ENCODE measurements at regions of chr19 and their contacts with region 1.

Region 1: GRCh38 chr19:34428549-34429285 is 536 bp downstream of the UBA2 start:
- DNase-seq: peak; percentile 43
- H3K4me3 ChIP-seq: peak overlapping the region; percentile 88
- H3K27ac ChIP-seq: peak overlapping the region; percentile 65
- H3K4me1 ChIP-seq: peaks cover 28% of the 10 kb centered on the region
- CTCF ChIP-seq: no peak

Region 2: DNA sequence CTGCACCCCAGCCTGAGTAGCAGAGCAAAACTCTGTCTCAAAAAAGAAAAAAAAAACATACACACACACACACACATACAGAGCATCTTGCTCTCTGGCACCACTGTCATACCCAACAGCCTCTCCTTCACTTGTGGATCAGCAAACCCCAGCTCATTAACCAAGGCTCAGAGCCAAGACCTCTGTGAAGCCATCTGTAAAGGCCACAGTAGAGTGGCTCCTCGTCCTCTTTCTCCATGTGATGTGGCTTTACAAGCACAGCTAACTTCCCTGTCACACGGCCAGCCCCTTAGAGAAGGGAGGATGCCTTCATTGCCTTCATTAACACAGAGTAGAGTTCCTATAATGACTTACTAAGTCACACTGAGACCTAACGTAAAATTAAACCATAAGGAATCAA is 319.1 kb before region 1 on chr19:
- CTCF ChIA-PET with region 1: no interaction called
- POLR2A ChIA-PET with region 1: no interaction called
- intact Hi-C with region 1: no loop called
- DNase-seq: no peak
- H3K4me3 ChIP-seq: no peak overlapping the region
- H3K27ac ChIP-seq: no peak overlapping the region
- H3K4me1 ChIP-seq: no peaks in the 10 kb centered on the region
- CTCF ChIP-seq: no peak

Region 3: GRCh38 chr19:34404109-34404897 is 24.4 kb before region 1 on chr19 and contains the start of gene PDCD2L:
- CTCF ChIA-PET with region 1: no interaction called
- POLR2A ChIA-PET with region 1: no interaction called
- intact Hi-C with region 1: loop called (anchors 2 kb)
- DNase-seq: peak; percentile 94
- H3K4me3 ChIP-seq: peak within 1 kb of the TSS; percentile 84
- H3K27ac ChIP-seq: peak within 1 kb of the TSS; percentile 32
- H3K4me1 ChIP-seq: peaks cover 32% of the 10 kb centered on the region
- CTCF ChIP-seq: no peak
- total RNA-seq, gene PDCD2L: 22.4 and 30.0 TPM in 2 replicates

Region 4: DNA sequence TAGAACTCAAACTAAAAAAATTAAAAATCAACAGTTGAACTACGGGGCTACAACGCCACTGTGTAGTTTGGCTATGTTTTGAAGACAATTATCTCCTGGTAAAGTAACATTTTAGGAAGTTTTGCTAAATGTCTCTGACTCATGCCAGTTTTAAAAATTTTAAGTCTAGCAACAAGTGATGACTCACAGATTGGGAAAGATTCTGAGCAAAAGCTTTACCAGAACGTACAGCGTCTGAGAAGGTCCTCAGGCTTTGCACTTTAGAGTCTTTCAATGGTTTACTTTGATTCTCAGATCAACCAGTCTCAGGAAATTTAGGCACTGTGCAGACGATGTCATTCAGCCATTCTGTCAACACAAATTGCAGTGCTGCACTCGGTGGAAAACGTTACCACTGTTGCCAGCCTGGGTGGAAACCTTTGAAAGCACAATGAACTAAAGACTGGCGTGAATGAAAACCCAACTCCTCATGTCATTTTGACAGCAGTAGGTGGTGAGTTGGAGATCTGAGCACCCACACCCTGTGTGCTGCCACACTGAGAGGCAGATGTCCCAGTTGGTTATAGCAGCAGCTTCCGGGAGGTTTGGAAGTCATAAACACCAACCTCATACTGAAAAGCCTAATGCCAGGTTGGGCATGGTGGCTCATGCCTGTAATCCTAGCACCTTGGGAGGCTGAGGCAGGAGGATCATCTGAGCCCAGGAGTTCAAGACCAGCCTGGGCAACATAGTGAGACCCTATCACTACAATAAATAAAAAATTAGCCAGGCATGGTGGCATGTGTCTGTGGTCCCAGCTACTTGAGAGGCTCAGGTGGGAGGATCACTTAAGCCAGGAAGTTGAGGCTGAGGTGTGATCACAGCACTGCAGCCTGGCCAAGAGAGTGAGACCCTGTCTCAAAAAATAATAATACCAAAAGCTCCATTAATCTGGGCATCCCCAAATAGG is 46.6 kb after region 1 on chr19:
- CTCF ChIA-PET with region 1: no interaction called
- POLR2A ChIA-PET with region 1: no interaction called
- intact Hi-C with region 1: no loop called
- DNase-seq: no peak
- H3K4me3 ChIP-seq: no peak overlapping the region
- H3K27ac ChIP-seq: no peak overlapping the region
- H3K4me1 ChIP-seq: no peaks in the 10 kb centered on the region
- CTCF ChIP-seq: no peak

Measured in OCI-LY7 (cell line).